ENCODE measurements at regions of chr16 and their contacts with region 1.

Region 1: DNA sequence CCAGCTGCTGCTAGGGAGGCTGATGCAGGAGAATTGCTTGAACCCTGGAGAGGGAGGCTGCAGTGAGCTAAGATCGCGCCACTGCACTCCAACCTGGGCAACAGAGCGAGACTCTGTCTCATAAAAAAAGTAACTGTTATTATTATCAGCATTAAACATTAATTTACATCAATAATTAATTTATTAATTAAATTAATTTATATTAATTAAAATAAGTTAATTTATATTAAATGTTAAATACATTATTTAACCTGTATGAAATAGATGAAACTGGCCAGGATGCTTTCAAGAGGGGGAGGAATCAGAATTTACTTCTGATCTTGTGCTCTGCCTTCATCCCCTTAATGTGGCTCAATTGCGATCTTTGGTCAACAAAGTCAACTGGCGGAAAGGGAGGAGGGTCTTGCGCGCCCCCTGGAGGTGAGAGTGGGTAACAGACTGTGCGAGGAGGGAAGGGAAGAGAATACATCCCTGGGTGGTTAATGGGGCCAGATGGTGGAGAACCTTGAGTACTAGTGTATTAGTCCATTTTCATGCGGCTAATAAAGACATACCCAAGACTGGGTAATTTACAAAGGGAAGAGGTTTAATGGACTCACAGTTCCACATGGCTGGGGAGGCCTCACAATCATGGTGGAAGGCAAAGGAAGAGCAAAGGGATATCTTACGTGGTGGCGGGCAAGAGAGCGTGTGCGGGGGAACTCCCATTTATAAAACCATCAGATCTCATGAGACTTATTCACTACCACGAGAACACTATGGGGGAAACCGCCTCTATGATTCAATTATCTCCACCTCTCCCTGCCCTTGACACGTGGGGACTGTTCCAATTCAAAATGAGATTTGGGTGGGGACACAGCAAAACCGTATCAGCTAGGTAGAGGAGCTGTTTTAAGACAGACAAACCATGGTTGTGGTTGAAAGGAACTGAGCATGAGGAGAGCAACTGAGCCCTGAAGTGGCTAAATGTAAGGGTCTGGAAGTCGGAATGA is 15.7 kb upstream of the CPPED1 start:
- DNase-seq: peak; percentile 61 to 84 (median 64)
- H3K4me3 ChIP-seq: no peak overlapping the region
- H3K27ac ChIP-seq: no peak overlapping the region
- H3K4me1 ChIP-seq: no peaks in the 10 kb centered on the region
- H3K27me3 ChIP-seq: no peaks in the 10 kb centered on the region
- CTCF ChIP-seq: peak; percentile 75 to 94 (median 89)
- POLR2A ChIP-seq: no peak

Region 2: DNA sequence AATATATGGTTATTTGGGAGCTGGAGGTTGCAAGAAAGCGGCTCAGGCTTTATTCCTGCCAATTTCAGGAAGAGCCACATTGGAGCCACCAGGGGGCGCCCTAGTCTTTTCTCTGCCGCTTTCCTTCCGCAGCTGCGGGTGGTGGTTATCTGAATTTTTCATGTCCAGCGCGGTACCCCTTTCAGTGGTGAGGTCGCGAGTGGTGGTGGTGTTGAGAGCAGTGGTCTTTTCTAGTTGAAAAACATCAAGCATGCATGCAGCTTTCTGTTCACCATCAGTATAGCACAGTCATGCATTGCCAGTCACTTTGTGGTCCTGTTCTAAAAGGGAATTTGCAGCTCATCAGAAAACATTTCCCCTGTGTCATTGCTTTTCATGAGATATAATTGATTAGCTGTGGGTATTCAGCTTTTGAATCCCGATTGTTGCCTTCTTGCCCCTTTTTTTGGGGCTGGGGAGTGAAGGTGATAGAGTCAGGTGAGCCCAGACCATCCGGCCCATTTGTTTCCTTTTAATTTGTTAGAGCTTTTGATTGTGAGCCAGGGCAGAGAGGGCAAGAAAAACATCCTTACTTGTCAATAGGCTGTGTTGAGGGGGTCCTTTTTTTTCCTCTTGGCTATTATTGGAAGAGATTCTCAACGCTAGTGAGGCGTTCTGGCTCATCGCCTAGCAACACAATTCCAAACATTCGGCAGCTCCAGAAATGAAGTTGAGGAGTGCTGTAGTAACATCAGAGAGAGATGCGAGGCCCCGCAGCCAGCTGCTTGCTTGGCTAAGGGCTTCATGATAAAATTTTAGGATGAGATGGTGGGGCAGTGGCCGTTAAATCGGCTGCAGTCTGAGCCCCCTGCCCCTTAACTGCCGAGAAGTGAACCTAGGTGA is 723.9 kb before region 1 on chr16:
- intact Hi-C with region 1: loop called in 1 of 2 experiments (anchors 10 kb)
- DNase-seq: peak; percentile 39 to 81 (median 71)
- H3K4me3 ChIP-seq: no peak overlapping the region
- H3K27ac ChIP-seq: no peak overlapping the region
- H3K4me1 ChIP-seq: peaks cover 0 to 32% of the 10 kb centered on the region in 2 donors
- H3K27me3 ChIP-seq: no peaks in the 10 kb centered on the region
- CTCF ChIP-seq: peak; percentile 71 to 96 (median 80)
- POLR2A ChIP-seq: no peak

Region 3: DNA sequence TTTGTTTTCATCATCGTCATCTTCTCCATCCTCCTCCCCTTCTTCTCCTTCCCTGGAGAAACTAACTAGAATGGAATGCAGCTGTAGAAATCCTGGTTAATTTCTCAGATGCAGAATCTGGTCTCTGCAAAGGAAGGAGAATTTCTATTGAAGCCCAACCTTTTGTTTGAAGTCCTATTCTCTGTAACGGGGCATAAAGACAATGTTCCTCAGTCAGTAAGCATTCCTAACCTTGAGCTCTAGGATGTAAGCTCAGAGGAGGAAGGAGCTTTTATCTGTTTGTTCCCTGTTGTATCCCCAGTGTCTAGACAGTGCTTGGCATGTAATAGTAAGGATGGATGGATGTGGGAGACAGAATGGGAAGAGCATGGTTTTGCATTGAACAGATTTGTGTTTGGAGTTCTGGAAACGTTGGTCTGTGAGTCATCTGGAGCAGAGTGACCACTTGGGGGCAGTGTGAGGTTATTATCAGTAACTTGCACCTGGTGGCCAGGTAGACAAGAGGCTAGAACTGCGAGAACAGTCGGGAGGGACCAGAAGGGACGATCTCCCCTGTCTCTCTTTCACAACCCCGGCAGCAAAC is 479.2 kb before region 1 on chr16:
- intact Hi-C with region 1: loop called in 1 of 2 experiments (anchors 10 kb)
- DNase-seq: peak in 3 of 7 donors; percentile 19 to 63 (median 34)
- H3K4me3 ChIP-seq: no peak overlapping the region
- H3K27ac ChIP-seq: no peak overlapping the region
- H3K4me1 ChIP-seq: no peaks in the 10 kb centered on the region
- H3K27me3 ChIP-seq: no peaks in the 10 kb centered on the region
- CTCF ChIP-seq: peak; percentile 14 to 47 (median 36)
- POLR2A ChIP-seq: no peak

Region 4: GRCh38 chr16:12455287-12455798 is 364.1 kb before region 1 on chr16:
- intact Hi-C with region 1: loop called (anchors 5 to 10 kb)
- DNase-seq: peak; percentile 33 to 79 (median 64)
- H3K4me3 ChIP-seq: no peak overlapping the region
- H3K27ac ChIP-seq: no peak overlapping the region
- H3K4me1 ChIP-seq: no peaks in the 10 kb centered on the region
- H3K27me3 ChIP-seq: no peaks in the 10 kb centered on the region
- CTCF ChIP-seq: peak; percentile 76 to 92 (median 82)
- POLR2A ChIP-seq: no peak

Region 5: DNA sequence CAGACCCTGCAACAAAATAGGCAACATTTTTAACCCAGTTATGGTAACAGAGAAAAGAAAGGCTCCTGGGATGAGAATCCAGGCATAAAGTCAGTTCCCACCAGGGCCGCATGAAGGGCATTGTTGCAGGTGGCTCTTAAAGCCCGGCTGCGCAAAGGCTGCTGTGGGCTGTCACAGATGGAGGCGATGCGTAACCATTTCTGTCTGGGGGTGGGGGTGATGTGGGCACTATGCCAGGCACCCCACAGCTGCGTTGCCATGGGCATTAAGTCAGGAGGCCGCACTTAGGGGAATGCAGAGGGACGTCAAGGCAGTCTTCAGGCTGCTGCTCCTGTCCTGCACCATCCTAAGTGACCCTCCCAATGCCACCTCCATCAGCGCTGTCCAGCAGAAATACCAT is 244.1 kb before region 1 on chr16:
- intact Hi-C with region 1: loop called in 1 of 2 experiments (anchors 5 kb)
- DNase-seq: no peak
- H3K4me3 ChIP-seq: no peak overlapping the region
- H3K27ac ChIP-seq: no peak overlapping the region
- H3K4me1 ChIP-seq: no peaks in the 10 kb centered on the region
- H3K27me3 ChIP-seq: no peaks in the 10 kb centered on the region
- CTCF ChIP-seq: no peak
- POLR2A ChIP-seq: no peak

Region 6: GRCh38 chr16:12675852-12676251 is 143.6 kb before region 1 on chr16:
- intact Hi-C with region 1: no loop called
- DNase-seq: no peak
- H3K4me3 ChIP-seq: no peak overlapping the region
- H3K27ac ChIP-seq: no peak overlapping the region
- H3K4me1 ChIP-seq: no peaks in the 10 kb centered on the region
- H3K27me3 ChIP-seq: no peaks in the 10 kb centered on the region
- CTCF ChIP-seq: no peak
- POLR2A ChIP-seq: no peak